Activated T-helper 1 cell treated with anti-CD3 and anti-CD28 coated beads, Interleukin-12 subunit alpha, Interleukin-12 subunit beta, Interleukin-2, Interleukin-4 antibody, amounts not matched to agents 30 ng/mL and 10 ng/mL and 1 ng/mL, durations not matched to agents 14 hours and 24 hours and 36 hours (primary cell): ENCODE measurements at regions of chr16 and their contacts with region 1.

Region 1: DNA sequence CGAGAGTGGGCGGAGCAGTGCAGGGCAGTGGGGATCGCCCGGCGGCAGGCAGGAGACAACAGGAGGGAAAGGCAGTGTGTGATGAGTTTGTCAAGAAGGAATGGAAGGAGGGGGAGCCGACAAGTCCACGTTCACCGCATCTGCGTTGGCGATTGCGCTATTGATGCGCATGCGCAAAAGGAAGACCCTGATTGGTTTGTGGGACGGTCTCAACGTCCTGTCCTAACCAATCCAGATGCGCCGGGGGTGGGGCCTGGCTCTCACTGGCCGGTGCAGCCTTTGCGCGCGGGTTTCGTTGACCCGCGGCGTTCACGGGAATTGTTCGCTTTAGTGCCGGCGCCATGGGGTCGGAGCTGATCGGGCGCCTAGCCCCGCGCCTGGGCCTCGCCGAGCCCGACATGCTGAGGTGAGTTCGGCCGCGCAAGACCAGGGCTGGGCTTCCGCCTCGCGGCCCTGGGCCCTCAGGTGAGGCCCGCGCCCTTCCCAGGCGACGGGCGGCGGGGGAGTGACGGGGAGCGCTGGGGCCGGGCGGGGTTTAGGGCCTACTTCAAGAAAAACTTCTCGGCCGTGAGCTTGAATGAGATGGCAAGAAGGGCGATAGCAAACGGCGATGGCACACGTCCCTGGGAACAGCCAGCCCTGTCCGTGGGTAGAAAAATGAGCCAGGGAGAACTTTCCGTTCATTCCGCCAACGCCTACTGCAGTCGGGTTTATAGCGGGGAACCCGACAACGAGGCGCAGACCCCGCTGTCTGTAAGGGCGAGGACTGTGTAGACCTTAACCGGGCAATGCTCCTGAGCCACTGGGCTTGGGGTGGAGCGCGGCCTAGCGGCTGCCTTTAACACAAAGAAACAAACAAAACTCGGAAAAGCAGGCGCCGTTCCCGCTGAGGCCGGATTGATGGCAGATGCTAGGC is at the start of gene ORC6:
- DNase-seq: peak; percentile 95
- H3K4me3 Mint-ChIP-seq: no peak within 1 kb of the TSS
- H3K27ac Mint-ChIP-seq: no peak within 1 kb of the TSS
- H3K4me1 Mint-ChIP-seq: peaks cover 29% of the 10 kb centered on the region
- H3K27me3 Mint-ChIP-seq: no peaks in the 10 kb centered on the region
- total RNA-seq, gene ORC6: 68.2 and 69.1 TPM in 2 replicates

Region 2: DNA sequence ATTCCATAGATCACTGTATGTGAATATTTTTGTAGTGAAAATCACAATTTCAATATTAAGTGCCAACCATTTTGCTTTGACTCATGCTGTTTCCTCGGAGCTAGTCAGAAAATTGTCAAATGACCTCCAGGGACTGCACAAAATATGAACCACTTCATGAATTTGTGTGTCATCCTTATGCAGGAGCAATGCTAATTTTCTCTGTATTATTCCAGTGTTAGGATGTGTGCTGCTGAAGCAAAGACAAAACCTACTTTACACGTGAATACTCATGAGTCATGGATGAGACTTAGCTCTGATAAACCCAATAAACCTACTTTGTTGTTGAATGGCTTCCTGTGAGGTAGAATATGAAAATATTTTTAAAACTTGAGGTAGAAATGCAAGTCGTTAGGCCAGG is 133.7 kb before region 1 on chr16:
- intact Hi-C with region 1: loop called (anchors 1 kb)
- DNase-seq: no peak
- H3K4me3 Mint-ChIP-seq: no peak overlapping the region
- H3K27ac Mint-ChIP-seq: no peak overlapping the region
- H3K4me1 Mint-ChIP-seq: no peaks in the 10 kb centered on the region
- H3K27me3 Mint-ChIP-seq: peaks cover 3% of the 10 kb centered on the region

Region 3: DNA sequence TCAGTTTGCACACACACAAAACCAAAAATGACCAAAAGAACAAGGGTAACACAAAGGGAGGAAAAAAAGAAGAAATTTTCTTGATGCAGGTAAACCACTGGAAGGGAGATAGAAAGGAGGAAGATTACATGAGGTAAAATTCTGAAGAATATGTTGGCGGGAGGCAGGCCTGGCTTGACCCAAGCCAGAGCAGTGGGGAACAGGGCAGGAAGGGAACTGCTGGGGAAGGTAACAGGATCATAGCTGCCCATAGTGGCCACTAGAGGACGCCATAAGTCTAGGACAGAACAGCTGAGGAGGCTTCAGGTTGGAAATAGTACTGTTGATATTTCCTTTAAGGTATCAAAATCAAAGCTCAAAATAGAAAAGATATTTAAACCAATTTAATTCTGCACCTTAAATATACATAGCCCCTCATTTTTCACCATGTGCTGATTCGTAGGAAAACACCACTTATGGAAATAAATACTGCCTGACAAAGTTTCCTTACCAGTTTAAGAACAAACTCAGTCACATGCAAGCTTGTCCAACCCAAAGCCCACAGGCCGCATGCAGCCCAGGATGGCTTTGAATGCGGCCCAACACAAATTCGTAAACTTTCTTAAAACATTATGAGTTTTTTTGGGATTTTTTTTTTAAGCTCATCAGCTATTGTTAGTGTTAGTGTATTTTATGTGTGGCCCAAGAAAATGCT is 16.2 kb before region 1 on chr16:
- intact Hi-C with region 1: loop called (anchors 1 kb)
- DNase-seq: peak; percentile 22
- H3K4me3 Mint-ChIP-seq: no peak overlapping the region
- H3K27ac Mint-ChIP-seq: no peak overlapping the region
- H3K4me1 Mint-ChIP-seq: peaks cover 4% of the 10 kb centered on the region
- H3K27me3 Mint-ChIP-seq: no peaks in the 10 kb centered on the region

Region 4: DNA sequence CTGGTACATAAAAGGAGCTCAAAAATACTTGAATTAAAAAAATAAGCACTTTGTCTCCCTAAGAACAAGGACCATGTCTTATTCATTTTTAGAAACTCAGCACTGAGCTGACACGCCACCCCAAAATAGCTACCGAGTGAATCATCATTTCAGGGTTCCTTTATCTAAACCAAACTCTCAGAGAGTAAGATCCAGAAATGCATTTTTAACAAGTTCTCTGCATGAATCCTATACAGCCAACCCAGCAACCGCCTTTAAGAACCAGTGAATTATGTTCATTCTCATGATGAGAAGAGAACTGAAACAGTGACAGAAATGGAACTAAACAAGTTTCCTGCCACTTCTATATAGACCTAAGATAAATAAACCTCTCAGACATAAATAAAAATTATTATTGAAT is 132.6 kb after region 1 on chr16:
- intact Hi-C with region 1: loop called (anchors 2 kb)
- DNase-seq: no peak
- H3K4me3 Mint-ChIP-seq: no peak overlapping the region
- H3K27ac Mint-ChIP-seq: no peak overlapping the region
- H3K4me1 Mint-ChIP-seq: peaks cover 34% of the 10 kb centered on the region
- H3K27me3 Mint-ChIP-seq: no peaks in the 10 kb centered on the region

Region 5: GRCh38 chr16:46883690-46884512 is 194.3 kb after region 1 on chr16 and contains the start of gene GPT2:
- intact Hi-C with region 1: loop called (anchors 1 kb)
- DNase-seq: peak; percentile 82
- H3K4me3 Mint-ChIP-seq: peak within 1 kb of the TSS; percentile 87
- H3K27ac Mint-ChIP-seq: peak within 1 kb of the TSS; percentile 76
- H3K4me1 Mint-ChIP-seq: peaks cover 17% of the 10 kb centered on the region
- H3K27me3 Mint-ChIP-seq: peaks cover 12% of the 10 kb centered on the region
- total RNA-seq, gene GPT2: 20.9 and 22.3 TPM in 2 replicates

Region 6: DNA sequence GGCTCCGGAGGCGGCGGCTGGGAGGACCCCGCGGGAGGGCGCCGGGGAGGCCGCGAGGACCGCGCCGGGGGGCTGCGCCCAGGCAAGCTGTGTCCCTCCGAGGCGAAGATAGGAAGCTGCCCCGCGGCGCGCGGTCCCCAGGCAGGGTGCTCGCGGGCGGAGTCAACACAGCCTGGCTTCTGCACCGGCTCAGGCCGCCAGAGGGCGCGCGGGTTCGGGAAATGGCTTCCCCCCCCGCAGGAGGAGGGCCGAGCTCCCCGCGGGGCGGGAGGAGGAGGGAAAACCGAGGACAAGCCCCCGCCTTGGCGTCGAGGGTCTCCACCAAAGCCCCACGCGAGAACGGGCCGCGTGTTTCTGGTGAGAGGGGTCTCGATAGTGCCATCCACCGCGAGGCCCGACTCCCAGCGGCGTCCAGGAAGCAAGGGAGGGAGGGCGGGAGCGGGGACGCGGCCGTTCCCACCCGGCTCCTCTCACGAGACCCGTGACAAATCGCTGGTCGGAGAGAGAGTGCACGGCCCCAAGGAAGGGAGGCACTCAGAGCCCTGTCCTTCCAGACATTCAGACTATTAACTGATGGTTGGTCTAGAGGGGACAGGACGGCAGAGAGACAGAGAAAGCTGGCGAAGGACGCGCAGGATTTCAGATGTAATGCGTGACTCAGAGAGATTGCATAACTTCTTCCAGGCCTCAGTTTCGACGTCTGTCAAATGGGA is 348.3 kb after region 1 on chr16:
- intact Hi-C with region 1: loop called (anchors 5 kb)
- DNase-seq: peak; percentile 85
- H3K4me3 Mint-ChIP-seq: peak overlapping the region; percentile 81
- H3K27ac Mint-ChIP-seq: no peak overlapping the region
- H3K4me1 Mint-ChIP-seq: peaks cover 4% of the 10 kb centered on the region
- H3K27me3 Mint-ChIP-seq: peaks cover 14% of the 10 kb centered on the region